ENCODE measurements at regions of chr7 and their contacts with region 1.

Region 1: DNA sequence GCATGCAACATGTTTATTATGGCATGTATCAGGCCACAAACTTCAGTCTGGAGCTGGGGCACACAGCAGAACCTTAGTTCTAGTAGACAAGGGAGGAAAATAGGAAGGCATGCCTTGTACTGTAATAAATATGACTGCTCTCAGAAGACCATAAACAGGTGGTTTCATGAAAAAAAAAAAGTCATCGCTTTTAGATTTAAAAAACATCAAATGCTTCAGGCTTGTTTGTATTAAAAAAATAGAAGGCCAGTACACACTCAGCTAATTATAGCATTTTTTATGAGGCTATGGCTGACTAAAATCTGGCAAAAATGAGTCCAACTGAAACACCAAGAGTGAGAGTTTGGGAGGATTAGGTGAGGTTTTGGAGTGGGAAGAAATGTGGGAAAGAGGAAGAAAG is 204.1 kb downstream of the JAZF1 start:
- DNase-seq: no peak
- H3K4me3 ChIP-seq: no peak overlapping the region
- H3K27ac ChIP-seq: no peak overlapping the region
- H3K4me1 ChIP-seq: no peaks in the 10 kb centered on the region
- CTCF ChIP-seq: no peak

Region 2: GRCh38 chr7:28013441-28013840 is 36.9 kb after region 1 on chr7:
- CTCF ChIA-PET with region 1: no interaction called
- POLR2A ChIA-PET with region 1: interaction called, 10 read pairs
- intact Hi-C with region 1: no loop called
- DNase-seq: no peak
- H3K4me3 ChIP-seq: no peak overlapping the region
- H3K27ac ChIP-seq: no peak overlapping the region
- H3K4me1 ChIP-seq: no peaks in the 10 kb centered on the region
- CTCF ChIP-seq: no peak

Measured in OCI-LY7 (cell line).